ENCODE measurements at regions of chr3 and their contacts with region 1.

Region 1: GRCh38 chr3:111311709-111312235 is 230.2 kb upstream of the CD96 start:
- DNase-seq: peak in 2 of 5 donors; percentile 7 to 19
- H3K4me3 ChIP-seq: no peak overlapping the region
- H3K4me3 Mint-ChIP-seq: peak overlapping the region; percentile 9 to 79 (median 61)
- H3K27ac ChIP-seq: peak overlapping the region; percentile 25
- H3K27ac Mint-ChIP-seq: peak overlapping the region; percentile 61 to 98 (median 93)
- H3K4me1 ChIP-seq: peaks cover 55% of the 10 kb centered on the region
- H3K4me1 Mint-ChIP-seq: peaks cover 32 to 40% (median 33%) of the 10 kb centered on the region in 4 donors
- H3K27me3 ChIP-seq: no peaks in the 10 kb centered on the region
- H3K27me3 Mint-ChIP-seq: no peaks in the 10 kb centered on the region

Region 2: GRCh38 chr3:111324645-111325044 is 12.9 kb after region 1 on chr3:
- CTCF ChIA-PET with region 1: interaction called, 4 read pairs
- POLR2A ChIA-PET with region 1: interaction called, 10 read pairs
- intact Hi-C with region 1: no loop called
- DNase-seq: no peak
- H3K4me3 ChIP-seq: peak overlapping the region in 1 of 2 donors; percentile 14
- H3K4me3 Mint-ChIP-seq: peak overlapping the region; percentile 57 to 88 (median 80)
- H3K27ac ChIP-seq: peak overlapping the region; percentile 18
- H3K27ac Mint-ChIP-seq: peak overlapping the region; percentile 33 to 94 (median 85)
- H3K4me1 ChIP-seq: peaks cover 23% of the 10 kb centered on the region
- H3K4me1 Mint-ChIP-seq: peaks cover 26 to 41% (median 33%) of the 10 kb centered on the region in 4 donors
- H3K27me3 ChIP-seq: no peaks in the 10 kb centered on the region
- H3K27me3 Mint-ChIP-seq: no peaks in the 10 kb centered on the region